ENCODE measurements at regions of chr10 and their contacts with region 1.

Region 1: GRCh38 chr10:110918643-110919363 is at the start of gene BBIP1:
- DNase-seq: no peak
- ATAC-seq: peak; percentile 96
- H3K4me3 Mint-ChIP-seq: peak within 1 kb of the TSS; percentile 97
- H3K27ac Mint-ChIP-seq: peak within 1 kb of the TSS; percentile 98
- H3K4me1 Mint-ChIP-seq: peaks cover 32% of the 10 kb centered on the region
- H3K27me3 Mint-ChIP-seq: no peaks in the 10 kb centered on the region
- CTCF ChIP-seq: no peak
- total RNA-seq, gene BBIP1: 19.0 to 26.7 TPM (median 23.3 TPM) in 3 replicates

Region 2: GRCh38 chr10:110872145-110872983 is 46.4 kb before region 1 on chr10:
- CTCF ChIA-PET with region 1: interaction called, 5 read pairs
- POLR2A ChIA-PET with region 1: interaction called, 10 read pairs
- DNase-seq: peak; percentile 83
- ATAC-seq: peak; percentile 61
- H3K4me3 Mint-ChIP-seq: peak overlapping the region; percentile 82
- H3K27ac Mint-ChIP-seq: peak overlapping the region; percentile 94
- H3K4me1 Mint-ChIP-seq: peaks cover 29% of the 10 kb centered on the region
- H3K27me3 Mint-ChIP-seq: no peaks in the 10 kb centered on the region
- CTCF ChIP-seq: no peak

Region 3: DNA sequence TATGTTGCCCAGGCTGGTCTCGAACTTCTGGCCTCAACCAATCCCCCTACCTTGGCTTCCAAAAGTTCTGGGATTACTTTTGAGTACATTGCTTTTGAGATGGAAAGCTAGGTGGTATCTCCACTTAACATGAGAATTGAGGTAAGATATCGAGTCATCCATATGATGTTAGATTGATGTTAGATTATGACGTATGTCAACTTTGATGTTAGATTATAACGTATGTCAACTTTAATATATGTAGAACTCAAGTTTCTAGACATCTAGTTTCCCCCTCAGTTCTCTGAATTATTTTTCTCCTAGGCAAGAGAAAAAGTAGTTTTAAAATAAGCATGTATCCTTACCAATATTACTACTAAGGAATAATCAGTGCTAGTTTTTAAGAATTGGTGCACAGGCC is 20.6 kb after region 1 on chr10:
- CTCF ChIA-PET with region 1: no interaction called
- POLR2A ChIA-PET with region 1: no interaction called
- DNase-seq: no peak
- ATAC-seq: no peak
- H3K4me3 Mint-ChIP-seq: no peak overlapping the region
- H3K27ac Mint-ChIP-seq: no peak overlapping the region
- H3K4me1 Mint-ChIP-seq: peaks cover 18% of the 10 kb centered on the region
- H3K27me3 Mint-ChIP-seq: no peaks in the 10 kb centered on the region
- CTCF ChIP-seq: no peak

Region 4: GRCh38 chr10:111084366-111085255 is 165.8 kb after region 1 on chr10:
- CTCF ChIA-PET with region 1: no interaction called
- POLR2A ChIA-PET with region 1: no interaction called
- DNase-seq: no peak
- ATAC-seq: no peak
- H3K4me3 Mint-ChIP-seq: no peak overlapping the region
- H3K27ac Mint-ChIP-seq: no peak overlapping the region
- H3K4me1 Mint-ChIP-seq: peaks cover 12% of the 10 kb centered on the region
- H3K27me3 Mint-ChIP-seq: peaks cover 19% of the 10 kb centered on the region
- CTCF ChIP-seq: no peak

Region 5: GRCh38 chr10:111098679-111099437 is 180.1 kb after region 1 on chr10:
- CTCF ChIA-PET with region 1: no interaction called
- POLR2A ChIA-PET with region 1: no interaction called
- DNase-seq: no peak
- ATAC-seq: no peak
- H3K4me3 Mint-ChIP-seq: no peak overlapping the region
- H3K27ac Mint-ChIP-seq: no peak overlapping the region
- H3K4me1 Mint-ChIP-seq: peaks cover 3% of the 10 kb centered on the region; the same call in 1 of the 2 replicates
- H3K27me3 Mint-ChIP-seq: no peaks in the 10 kb centered on the region
- CTCF ChIP-seq: no peak